ENCODE measurements at regions of chr19 and their contacts with region 1.

Region 1: DNA sequence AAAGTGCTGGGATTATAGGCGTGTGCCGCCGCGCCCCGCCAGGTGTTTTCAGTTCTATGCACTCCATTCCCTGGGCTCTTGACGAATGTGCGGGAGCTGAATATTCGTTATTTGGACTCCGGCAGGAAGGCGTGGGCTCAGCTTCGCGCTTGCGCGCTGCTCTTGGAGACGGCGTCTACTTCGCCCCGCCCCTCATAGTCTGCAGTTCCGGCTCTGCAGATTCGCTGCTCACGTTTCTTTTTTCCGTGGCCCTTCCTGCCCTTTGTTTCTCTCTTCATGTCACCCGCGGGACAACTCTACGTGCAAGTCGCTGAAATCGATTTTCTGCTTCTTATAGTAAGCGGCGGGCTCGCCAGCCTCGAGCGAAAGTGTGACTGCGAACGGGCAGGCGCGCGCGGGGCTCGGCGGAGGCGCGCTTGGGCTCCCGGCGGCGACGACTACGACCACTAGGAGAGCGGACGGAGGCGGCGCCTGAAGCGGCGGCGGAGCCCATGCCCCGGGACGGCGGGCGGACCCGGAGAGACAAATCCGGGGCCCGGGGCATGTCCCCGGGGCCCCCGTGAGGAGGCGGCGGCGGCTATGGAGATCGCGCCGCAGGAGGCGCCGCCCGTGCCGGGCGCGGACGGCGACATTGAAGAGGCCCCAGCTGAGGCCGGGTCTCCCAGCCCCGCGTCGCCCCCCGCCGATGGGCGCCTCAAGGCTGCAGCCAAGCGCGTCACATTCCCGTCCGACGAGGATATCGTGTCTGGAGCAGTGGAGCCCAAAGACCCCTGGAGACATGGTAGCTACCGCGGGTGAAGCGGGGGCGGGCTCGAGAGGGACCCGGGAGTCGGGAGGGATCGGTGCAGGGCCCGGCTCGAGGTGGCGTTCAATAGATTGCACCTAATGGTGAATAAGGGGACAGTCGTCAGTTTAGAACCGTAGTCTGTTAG is at the start of gene PPP1R37:
- DNase-seq: peak; percentile 98
- H3K4me3 Mint-ChIP-seq: peak within 1 kb of the TSS; percentile 92
- H3K27ac Mint-ChIP-seq: peak within 1 kb of the TSS; percentile 94
- H3K4me1 Mint-ChIP-seq: peaks cover 41% of the 10 kb centered on the region
- H3K27me3 Mint-ChIP-seq: no peaks in the 10 kb centered on the region
- total RNA-seq, gene PPP1R37: 20.3 and 21.8 TPM in 2 replicates

Region 2: DNA sequence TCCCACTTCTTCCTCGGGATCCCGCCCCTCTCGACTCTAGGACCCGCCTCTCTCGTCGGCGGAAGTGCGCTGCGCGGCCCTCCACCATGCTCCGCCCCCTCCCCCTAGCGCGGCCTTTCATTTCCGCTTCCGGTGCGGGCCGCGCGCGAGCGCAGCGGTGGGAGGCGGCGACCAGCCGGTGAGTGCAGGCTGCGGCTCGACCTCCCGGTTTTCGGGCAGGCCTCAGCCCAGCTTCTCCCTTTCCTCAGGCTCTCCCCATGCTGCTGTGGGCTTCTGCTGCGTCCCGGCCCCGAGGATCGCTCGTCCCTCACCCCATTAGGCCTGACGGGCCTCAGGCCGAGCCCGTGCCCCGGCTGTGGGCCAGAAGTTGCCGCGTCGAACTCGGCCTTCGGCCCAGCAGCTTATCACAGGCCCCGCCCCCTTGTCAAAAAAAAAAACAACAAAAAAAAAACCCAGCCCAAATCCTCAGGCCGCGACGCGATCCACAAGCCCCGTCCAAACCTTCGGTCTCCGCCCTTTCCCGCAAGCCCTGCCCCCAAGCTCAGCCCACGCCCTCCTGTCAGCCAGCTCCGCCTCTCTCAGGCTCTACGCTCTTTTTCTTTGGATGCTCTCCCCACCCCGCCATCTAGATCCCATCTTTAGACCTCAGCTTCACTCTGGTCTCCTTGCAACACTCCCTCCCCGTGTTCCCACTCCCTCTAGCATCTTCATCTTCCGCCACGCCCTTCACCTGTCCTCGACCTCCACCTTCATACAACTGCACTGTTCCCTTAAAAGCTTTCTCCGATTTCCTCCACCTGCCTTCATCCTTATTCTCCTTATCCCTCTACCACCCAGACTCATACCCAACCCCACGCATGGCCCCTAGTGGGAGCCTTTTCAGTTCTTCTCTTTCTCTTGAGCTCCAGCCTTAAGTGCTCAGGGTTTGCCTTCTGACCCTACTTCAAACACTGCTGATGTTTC is 53.8 kb before region 1 on chr19 and contains the start of gene CLASRP:
- intact Hi-C with region 1: loop called (anchors 2 kb)
- DNase-seq: peak; percentile 97
- H3K4me3 Mint-ChIP-seq: peak within 1 kb of the TSS; percentile 88
- H3K27ac Mint-ChIP-seq: peak within 1 kb of the TSS; percentile 95
- H3K4me1 Mint-ChIP-seq: peaks cover 26% of the 10 kb centered on the region
- H3K27me3 Mint-ChIP-seq: no peaks in the 10 kb centered on the region
- total RNA-seq, gene CLASRP: 107 and 111 TPM in 2 replicates

Region 3: DNA sequence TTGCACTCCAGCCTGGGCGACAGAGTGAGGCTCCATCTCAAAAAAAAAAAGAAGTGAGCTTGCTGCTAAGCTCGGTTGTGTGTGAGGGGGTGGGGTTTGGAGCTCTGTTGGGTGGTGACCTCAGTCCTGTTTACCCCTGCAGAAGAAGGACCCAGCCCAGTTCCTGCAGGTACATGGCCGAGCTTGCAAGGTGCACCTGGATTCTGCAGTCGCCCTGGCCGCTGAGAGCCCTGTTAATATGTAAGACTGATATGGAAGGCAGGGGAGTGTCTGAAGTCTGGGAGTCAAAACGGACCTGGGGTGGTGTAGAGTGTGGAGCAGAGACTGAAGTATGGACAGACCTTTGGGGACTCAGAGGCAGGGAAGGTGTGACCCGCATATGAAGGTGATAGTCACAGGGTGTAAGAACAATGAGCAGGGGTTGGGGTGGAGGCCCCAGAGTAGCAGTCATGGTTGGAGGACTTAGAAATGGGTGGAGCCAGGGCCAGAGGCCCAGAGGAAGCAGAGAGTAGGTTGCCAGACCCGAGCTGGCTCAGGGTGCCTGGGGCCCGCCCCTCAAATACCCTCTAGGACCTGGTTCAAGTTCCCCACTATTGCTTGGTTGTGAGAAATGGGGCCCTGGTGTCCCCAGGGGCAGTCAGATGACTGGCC is 41.0 kb before region 1 on chr19:
- intact Hi-C with region 1: no loop called
- DNase-seq: no peak
- H3K4me3 Mint-ChIP-seq: no peak overlapping the region
- H3K27ac Mint-ChIP-seq: no peak overlapping the region
- H3K4me1 Mint-ChIP-seq: peaks cover 16% of the 10 kb centered on the region
- H3K27me3 Mint-ChIP-seq: no peaks in the 10 kb centered on the region

Region 4: DNA sequence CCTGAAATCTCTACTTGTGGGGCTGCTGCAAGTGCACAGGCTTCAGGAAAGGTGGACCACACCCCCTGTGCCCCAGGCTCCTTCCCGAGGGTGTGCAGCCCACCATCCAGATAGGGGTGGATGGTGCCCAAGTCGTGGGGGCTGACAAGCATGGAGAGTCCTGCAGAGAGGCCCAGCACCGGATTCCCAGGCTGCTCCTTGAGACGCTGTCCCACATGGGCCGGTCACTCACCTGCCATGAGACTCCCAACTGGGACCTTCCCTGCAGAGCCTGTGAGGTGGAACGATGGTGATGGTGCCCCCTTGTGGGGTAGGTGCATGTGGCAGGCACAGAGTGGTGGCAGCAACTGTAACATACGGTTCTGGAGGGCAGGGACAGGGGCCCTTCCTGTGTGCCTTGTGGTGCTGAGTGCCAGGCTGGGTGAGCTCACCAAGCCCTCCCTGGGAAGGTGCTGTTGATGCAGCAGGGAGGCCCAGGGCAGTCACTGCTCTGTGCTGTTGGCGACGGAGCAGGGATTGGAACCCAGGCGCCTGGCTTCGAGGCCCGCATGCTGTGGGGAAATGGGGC is 33.0 kb after region 1 on chr19:
- intact Hi-C with region 1: loop called (anchors 2 kb)
- DNase-seq: peak; percentile 91
- H3K4me3 Mint-ChIP-seq: no peak overlapping the region
- H3K27ac Mint-ChIP-seq: no peak overlapping the region
- H3K4me1 Mint-ChIP-seq: peaks cover 21% of the 10 kb centered on the region
- H3K27me3 Mint-ChIP-seq: no peaks in the 10 kb centered on the region

Region 5: DNA sequence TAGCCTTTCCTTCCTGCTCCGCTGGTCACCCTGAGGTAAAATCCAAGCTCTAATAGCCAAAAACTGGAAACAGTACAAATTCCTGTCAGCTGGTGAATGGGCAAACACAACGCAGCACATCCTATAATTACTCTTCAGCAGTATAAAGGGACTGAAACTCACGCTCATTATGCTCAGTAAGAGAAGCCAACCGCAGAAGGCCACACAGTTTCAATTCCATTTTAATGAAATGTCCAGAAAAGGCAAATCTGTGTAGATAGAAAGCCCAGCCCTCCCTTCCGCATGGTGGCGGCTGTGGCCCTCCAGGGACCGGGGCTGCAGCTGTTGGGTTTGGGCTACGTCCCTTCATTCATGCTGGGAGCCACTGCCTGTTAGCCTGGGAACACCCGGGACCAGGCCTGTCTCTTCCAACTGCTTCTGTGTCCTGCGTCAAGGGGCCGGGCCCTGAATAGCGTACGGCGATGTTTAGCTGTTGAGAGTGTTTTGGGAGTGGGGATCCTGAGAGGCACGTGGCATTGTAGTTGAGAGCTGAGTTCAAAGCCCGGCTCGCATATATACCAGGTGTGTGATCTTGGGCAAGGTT is 44.3 kb after region 1 on chr19:
- intact Hi-C with region 1: no loop called
- DNase-seq: no peak
- H3K4me3 Mint-ChIP-seq: no peak overlapping the region
- H3K27ac Mint-ChIP-seq: no peak overlapping the region
- H3K4me1 Mint-ChIP-seq: peaks cover 1% of the 10 kb centered on the region
- H3K27me3 Mint-ChIP-seq: no peaks in the 10 kb centered on the region

Region 6: GRCh38 chr19:45250832-45251451 is 157.9 kb after region 1 on chr19 and contains the start of gene MARK4:
- intact Hi-C with region 1: loop called (anchors 5 kb)
- DNase-seq: peak; percentile 86
- H3K4me3 Mint-ChIP-seq: peak within 1 kb of the TSS; percentile 87
- H3K27ac Mint-ChIP-seq: peak within 1 kb of the TSS; percentile 80
- H3K4me1 Mint-ChIP-seq: peaks cover 22% of the 10 kb centered on the region
- H3K27me3 Mint-ChIP-seq: peaks cover 2% of the 10 kb centered on the region
- total RNA-seq, gene MARK4: 26.1 and 29.0 TPM in 2 replicates

Measured in activated CD4-positive, alpha-beta T cell treated with anti-CD3 and anti-CD28 coated beads, Interleukin-2, amount 10 ng/mL, durations not matched to agents 24 days and 14 days (primary cell).